ENCODE measurements at regions of chr4 and their contacts with region 1.

Region 1: DNA sequence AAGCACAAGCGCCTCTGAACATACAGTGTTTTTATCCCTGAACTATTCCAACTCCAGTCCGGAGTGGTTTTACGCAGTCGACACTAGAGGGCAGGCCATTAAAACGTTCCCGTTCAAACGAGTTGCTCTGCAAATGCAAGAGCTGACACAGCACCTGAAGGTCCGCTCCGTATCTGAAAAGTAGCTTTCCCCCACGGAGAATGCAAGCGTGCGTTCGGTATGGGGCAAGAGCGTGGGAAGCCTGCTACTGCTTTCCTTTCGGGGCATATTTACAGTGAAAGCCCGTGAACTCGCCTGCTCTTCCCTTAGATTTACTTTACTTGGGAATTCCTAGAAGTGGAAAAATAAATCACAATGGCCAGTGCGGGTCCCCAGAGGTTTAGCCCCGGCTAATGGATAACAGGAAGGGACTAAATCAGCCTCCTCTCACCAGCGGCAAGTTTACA is 190.8 kb downstream of the TSPAN5 start:
- DNase-seq: peak; percentile 17 to 84
- H3K4me3 ChIP-seq: peak overlapping the region; percentile 42 to 61
- H3K27ac ChIP-seq: no peak overlapping the region
- H3K4me1 ChIP-seq: no peaks in the 10 kb centered on the region
- H3K27me3 ChIP-seq: no peaks in the 10 kb centered on the region
- CTCF ChIP-seq: peak; percentile 61 to 82 (median 79)

Region 2: GRCh38 chr4:98421111-98421510 is 46.5 kb before region 1 on chr4:
- intact Hi-C with region 1: no loop called
- DNase-seq: no peak
- H3K4me3 ChIP-seq: no peak overlapping the region
- H3K27ac ChIP-seq: no peak overlapping the region
- H3K4me1 ChIP-seq: no peaks in the 10 kb centered on the region
- H3K27me3 ChIP-seq: no peaks in the 10 kb centered on the region
- CTCF ChIP-seq: no peak

Region 3: GRCh38 chr4:98739751-98740150 is 272.1 kb after region 1 on chr4:
- intact Hi-C with region 1: loop called (anchors 10 kb)
- DNase-seq: no peak
- H3K4me3 ChIP-seq: no peak overlapping the region
- H3K27ac ChIP-seq: no peak overlapping the region
- H3K4me1 ChIP-seq: no peaks in the 10 kb centered on the region
- H3K27me3 ChIP-seq: no peaks in the 10 kb centered on the region
- CTCF ChIP-seq: no peak

Region 4: GRCh38 chr4:99061048-99061700 is 593.5 kb after region 1 on chr4:
- intact Hi-C with region 1: loop called (anchors 5 kb)
- DNase-seq: no peak
- H3K4me3 ChIP-seq: no peak overlapping the region
- H3K27ac ChIP-seq: peak overlapping the region; percentile 32 to 47
- H3K4me1 ChIP-seq: peaks cover 0 to 7% of the 10 kb centered on the region in 2 donors
- H3K27me3 ChIP-seq: no peaks in the 10 kb centered on the region
- CTCF ChIP-seq: no peak

Measured in ascending aorta (tissue), 2 donors.